PC-3 (cell line): ENCODE measurements at regions of chr1 and their contacts with region 1.

Region 1: GRCh38 chr1:108643492-108644335 is 17.2 kb downstream of the HENMT1 start:
- DNase-seq: peak; percentile 75
- ATAC-seq: peak; percentile 88
- H3K4me3 ChIP-seq: no peak overlapping the region
- H3K27ac ChIP-seq: no peak overlapping the region
- H3K4me1 ChIP-seq: peaks cover 8% of the 10 kb centered on the region
- H3K27me3 ChIP-seq: no peaks in the 10 kb centered on the region
- CTCF ChIP-seq: peak; percentile 89

Region 2: GRCh38 chr1:107782217-107782845 is 861.4 kb before region 1 on chr1:
- CTCF ChIA-PET with region 1: interaction called, 3 read pairs
- POLR2A ChIA-PET with region 1: no interaction called
- intact Hi-C with region 1: loop called (anchors 10 kb)
- DNase-seq: peak; percentile 76
- ATAC-seq: peak; percentile 86
- H3K4me3 ChIP-seq: no peak overlapping the region
- H3K27ac ChIP-seq: no peak overlapping the region
- H3K4me1 ChIP-seq: peaks cover 7% of the 10 kb centered on the region
- H3K27me3 ChIP-seq: no peaks in the 10 kb centered on the region
- CTCF ChIP-seq: peak; percentile 88

Region 3: DNA sequence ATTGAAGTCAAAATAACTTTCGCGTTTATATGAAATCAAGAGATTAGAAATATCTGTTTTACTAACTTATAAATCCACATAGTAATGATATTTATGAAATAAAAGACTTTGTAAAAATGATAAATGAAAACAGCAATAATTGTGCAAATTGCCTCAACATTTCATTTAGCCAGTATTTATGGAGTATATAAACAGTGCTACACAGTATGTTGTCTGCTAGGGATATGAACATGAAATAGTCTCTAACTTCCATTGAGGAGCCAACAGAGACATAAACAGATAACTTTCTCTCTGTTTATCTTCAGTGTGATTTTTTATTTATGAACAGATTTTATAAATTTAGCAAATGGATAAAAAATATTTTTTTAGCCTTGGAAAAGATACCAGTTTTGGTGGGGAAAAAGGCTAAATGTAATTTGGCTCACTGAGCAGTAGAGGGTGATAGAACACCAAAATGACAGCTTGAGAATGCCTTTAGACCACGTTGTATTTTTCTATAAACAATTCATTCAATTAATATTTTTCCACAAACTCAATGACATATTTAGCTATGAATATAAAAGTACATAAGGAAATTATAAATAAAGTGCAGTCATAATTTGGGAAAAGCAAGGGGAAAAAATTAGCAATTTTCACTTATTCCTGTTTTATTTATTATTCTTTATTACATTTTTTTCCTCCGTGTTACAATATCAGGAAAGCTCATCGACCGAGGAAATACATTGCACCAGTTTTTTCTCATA is 131.3 kb before region 1 on chr1:
- CTCF ChIA-PET with region 1: interaction called, 27 read pairs
- POLR2A ChIA-PET with region 1: no interaction called
- intact Hi-C with region 1: loop called (anchors 1 kb)
- DNase-seq: peak; percentile 61
- ATAC-seq: peak; percentile 54
- H3K4me3 ChIP-seq: no peak overlapping the region
- H3K27ac ChIP-seq: no peak overlapping the region
- H3K4me1 ChIP-seq: no peaks in the 10 kb centered on the region
- H3K27me3 ChIP-seq: no peaks in the 10 kb centered on the region
- CTCF ChIP-seq: peak; percentile 91

Region 4: GRCh38 chr1:108533351-108534083 is 110.2 kb before region 1 on chr1:
- CTCF ChIA-PET with region 1: no interaction called
- POLR2A ChIA-PET with region 1: no interaction called
- intact Hi-C with region 1: no loop called
- DNase-seq: peak; percentile 59
- ATAC-seq: peak; percentile 64
- H3K4me3 ChIP-seq: peak overlapping the region; percentile 55
- H3K27ac ChIP-seq: no peak overlapping the region
- H3K4me1 ChIP-seq: 0 out of 2 replicates have a peak, but pooled peaks cover 11% of the 10 kb centered on the region
- H3K27me3 ChIP-seq: 0 out of 2 replicates have a peak, but pooled peaks cover under 1% of the 10 kb centered on the region
- CTCF ChIP-seq: no peak

Region 5: DNA sequence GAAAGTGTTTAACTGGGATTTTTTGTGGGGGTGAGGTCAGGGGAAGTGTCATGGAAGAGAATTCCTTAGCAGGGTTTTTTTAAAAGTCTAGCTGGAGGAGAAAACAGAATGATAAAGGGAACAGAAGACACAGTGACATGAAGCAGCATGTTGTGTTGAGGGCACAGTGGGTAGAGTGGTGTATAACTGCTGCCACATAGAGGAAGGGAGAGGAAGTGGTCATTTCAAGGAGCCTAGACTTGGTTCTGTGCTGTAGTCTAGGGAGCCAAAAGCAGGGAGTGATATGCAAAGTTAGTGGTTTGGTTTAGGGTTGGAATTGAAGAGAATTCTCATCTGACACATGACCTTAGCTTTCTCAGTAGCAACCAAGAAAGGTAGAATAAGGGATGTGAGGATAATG is 73.6 kb before region 1 on chr1:
- CTCF ChIA-PET with region 1: no interaction called
- POLR2A ChIA-PET with region 1: no interaction called
- intact Hi-C with region 1: no loop called
- DNase-seq: peak; percentile 42
- ATAC-seq: peak; percentile 94
- H3K4me3 ChIP-seq: no peak overlapping the region
- H3K27ac ChIP-seq: no peak overlapping the region
- H3K4me1 ChIP-seq: no peaks in the 10 kb centered on the region
- H3K27me3 ChIP-seq: no peaks in the 10 kb centered on the region
- CTCF ChIP-seq: peak; percentile 66

Region 6: GRCh38 chr1:108628666-108629065 is 15.0 kb before region 1 on chr1:
- CTCF ChIA-PET with region 1: no interaction called
- POLR2A ChIA-PET with region 1: interaction called, 11 read pairs
- intact Hi-C with region 1: no loop called
- DNase-seq: no peak
- ATAC-seq: no peak
- H3K4me3 ChIP-seq: no peak overlapping the region
- H3K27ac ChIP-seq: no peak overlapping the region
- H3K4me1 ChIP-seq: no peaks in the 10 kb centered on the region
- H3K27me3 ChIP-seq: no peaks in the 10 kb centered on the region
- CTCF ChIP-seq: no peak

Region 7: GRCh38 chr1:108746372-108747205 is 102.9 kb after region 1 on chr1 and contains the start of gene STXBP3:
- CTCF ChIA-PET with region 1: no interaction called
- POLR2A ChIA-PET with region 1: no interaction called
- intact Hi-C with region 1: no loop called
- DNase-seq: peak; percentile 99
- ATAC-seq: peak; percentile 90
- H3K4me3 ChIP-seq: peak within 1 kb of the TSS; percentile 95
- H3K27ac ChIP-seq: peak within 1 kb of the TSS; percentile 62
- H3K4me1 ChIP-seq: peaks cover 7% of the 10 kb centered on the region
- H3K27me3 ChIP-seq: no peaks in the 10 kb centered on the region
- CTCF ChIP-seq: peak; percentile 90
- total RNA-seq, gene STXBP3: 14.8 and 17.2 TPM in 2 replicates

Region 8: DNA sequence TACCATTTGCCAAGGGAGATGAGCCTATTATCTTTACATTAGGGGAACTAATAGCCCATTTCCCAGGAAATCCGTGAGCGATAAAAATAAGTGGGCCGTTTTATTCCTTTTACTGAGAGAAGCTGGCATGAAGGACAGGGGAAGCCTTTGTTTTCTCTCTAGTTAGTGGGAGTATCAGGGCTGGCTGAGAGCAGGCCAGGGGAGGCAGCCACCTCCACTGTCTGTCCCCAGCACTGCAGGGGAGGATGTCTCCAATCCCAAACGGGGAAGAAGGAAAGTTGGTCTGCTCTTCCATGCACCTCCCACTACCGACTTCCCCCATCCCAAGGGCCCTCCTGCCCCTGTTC is 1471.1 kb after region 1 on chr1:
- CTCF ChIA-PET with region 1: no interaction called
- POLR2A ChIA-PET with region 1: no interaction called
- intact Hi-C with region 1: no loop called
- DNase-seq: no peak
- ATAC-seq: no peak
- H3K4me3 ChIP-seq: no peak overlapping the region
- H3K27ac ChIP-seq: no peak overlapping the region
- H3K4me1 ChIP-seq: no peaks in the 10 kb centered on the region
- H3K27me3 ChIP-seq: peaks cover 44% of the 10 kb centered on the region
- CTCF ChIP-seq: no peak